H1 (cell line): ENCODE measurements at regions of chr4 and their contacts with region 1.

Region 1: GRCh38 chr4:87916626-87917025 is 58.9 kb upstream of the SPP1 start:
- DNase-seq: no peak
- H3K4me3 ChIP-seq: no peak overlapping the region
- H3K27ac ChIP-seq: no peak overlapping the region
- H3K4me1 ChIP-seq: peaks cover 18 to 43% (median 32%) of the 10 kb centered on the region in 4 experiments
- H3K27me3 ChIP-seq: no peaks in the 10 kb centered on the region
- CTCF ChIP-seq: no peak
- EP300 ChIP-seq: no peak
- POLR2A ChIP-seq: no peak
- RAD21 ChIP-seq: no peak

Region 2: DNA sequence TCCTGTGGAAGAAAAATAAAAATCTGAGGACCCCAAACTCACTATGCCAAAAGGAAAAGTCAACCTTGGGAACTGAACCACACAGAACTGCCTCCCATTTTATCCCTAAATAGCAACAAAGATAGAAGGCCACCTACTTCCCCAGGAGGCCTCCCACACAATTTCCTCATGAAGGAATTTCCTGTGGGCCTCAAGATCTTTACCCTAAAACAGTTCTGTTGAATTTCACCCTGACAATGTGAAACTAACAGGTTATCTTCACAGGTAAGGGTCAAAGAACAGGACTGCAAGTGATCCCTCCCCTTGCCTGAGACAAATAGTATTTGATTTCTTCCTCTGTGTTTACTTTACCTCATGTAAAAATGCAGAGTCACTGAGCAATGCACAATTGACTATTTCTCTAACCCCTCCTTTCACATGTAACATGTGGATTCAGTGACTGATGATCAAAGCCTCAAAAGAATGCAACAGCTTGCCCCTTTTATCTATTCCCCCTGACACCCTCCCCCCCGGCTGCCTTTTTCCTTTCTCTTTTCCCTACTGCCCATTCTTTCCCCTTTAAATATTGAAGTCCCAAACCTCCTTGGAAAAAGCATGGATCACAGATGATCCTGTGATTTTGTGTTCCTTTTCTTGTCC is 50.5 kb before region 1 on chr4:
- CTCF ChIA-PET with region 1: interaction called, 5 read pairs
- POLR2A ChIA-PET with region 1: interaction called, 101 read pairs
- DNase-seq: peak in 1 of 2 experiments; percentile 47
- H3K4me3 ChIP-seq: peak overlapping the region in 3 of 4 experiments; percentile 15 to 55 (median 15); a peak in 3 of 8 replicates
- H3K27ac ChIP-seq: peak overlapping the region; percentile 59; the same call in 1 of the 2 replicates
- H3K4me1 ChIP-seq: peaks cover 0 to 14% (median 7%) of the 10 kb centered on the region in 4 experiments; a peak in 3 of 7 replicates
- H3K27me3 ChIP-seq: no peaks in the 10 kb centered on the region
- CTCF ChIP-seq: no peak
- EP300 ChIP-seq: no peak; a peak in 1 of 3 replicates
- POLR2A ChIP-seq: peak; percentile 45 to 60; a peak in 2 of 3 replicates
- RAD21 ChIP-seq: no peak

Region 3: DNA sequence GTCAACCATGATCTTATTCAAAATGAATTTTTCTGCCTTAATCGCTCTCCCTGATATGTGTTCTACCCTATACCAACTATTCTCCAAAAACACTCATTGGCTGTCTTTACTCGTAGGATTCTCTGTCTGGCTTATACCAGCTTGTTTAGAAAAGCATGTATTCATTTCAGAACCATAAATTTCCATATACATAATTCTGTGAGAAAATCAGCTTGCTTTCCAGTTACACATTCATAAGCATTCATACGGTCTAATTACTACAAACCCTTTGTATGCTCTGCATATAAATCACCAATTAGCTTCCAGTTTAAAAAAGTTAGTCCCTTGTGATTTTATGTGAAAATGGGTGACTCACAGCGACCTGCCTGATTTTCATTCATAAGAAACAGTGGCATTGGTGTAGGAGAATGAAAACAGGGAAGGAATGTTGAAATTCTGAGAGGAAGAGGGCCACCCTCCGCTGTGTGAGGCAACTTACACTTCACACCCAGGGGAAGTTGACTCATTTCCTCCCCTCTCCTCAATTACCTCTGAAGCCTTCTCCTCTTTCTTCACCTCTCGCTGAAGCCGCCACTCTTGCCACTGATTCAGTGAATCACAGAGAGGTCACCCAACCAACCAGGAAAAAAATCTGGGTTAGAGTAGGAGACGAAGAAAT is 20.5 kb before region 1 on chr4:
- CTCF ChIA-PET with region 1: interaction called, 3 read pairs
- POLR2A ChIA-PET with region 1: interaction called, 19 read pairs
- DNase-seq: peak in 1 of 2 experiments; percentile 57
- H3K4me3 ChIP-seq: no peak overlapping the region
- H3K27ac ChIP-seq: no peak overlapping the region
- H3K4me1 ChIP-seq: peaks cover 2 to 6% (median 2%) of the 10 kb centered on the region in 4 experiments; a peak in 4 of 7 replicates
- H3K27me3 ChIP-seq: no peaks in the 10 kb centered on the region
- CTCF ChIP-seq: no peak
- EP300 ChIP-seq: no peak
- POLR2A ChIP-seq: no peak
- RAD21 ChIP-seq: no peak

Region 4: GRCh38 chr4:87926554-87927098 is 10.0 kb after region 1 on chr4:
- CTCF ChIA-PET with region 1: no interaction called
- POLR2A ChIA-PET with region 1: interaction called, 143 read pairs
- DNase-seq: no peak
- H3K4me3 ChIP-seq: peak overlapping the region; percentile 34 to 69 (median 36)
- H3K27ac ChIP-seq: no peak overlapping the region
- H3K4me1 ChIP-seq: peaks cover 0 to 3% (median under 1%) of the 10 kb centered on the region in 4 experiments; a peak in 1 of 7 replicates
- H3K27me3 ChIP-seq: no peaks in the 10 kb centered on the region
- CTCF ChIP-seq: no peak
- EP300 ChIP-seq: no peak
- POLR2A ChIP-seq: peak; percentile 63 to 90
- RAD21 ChIP-seq: no peak

Region 5: DNA sequence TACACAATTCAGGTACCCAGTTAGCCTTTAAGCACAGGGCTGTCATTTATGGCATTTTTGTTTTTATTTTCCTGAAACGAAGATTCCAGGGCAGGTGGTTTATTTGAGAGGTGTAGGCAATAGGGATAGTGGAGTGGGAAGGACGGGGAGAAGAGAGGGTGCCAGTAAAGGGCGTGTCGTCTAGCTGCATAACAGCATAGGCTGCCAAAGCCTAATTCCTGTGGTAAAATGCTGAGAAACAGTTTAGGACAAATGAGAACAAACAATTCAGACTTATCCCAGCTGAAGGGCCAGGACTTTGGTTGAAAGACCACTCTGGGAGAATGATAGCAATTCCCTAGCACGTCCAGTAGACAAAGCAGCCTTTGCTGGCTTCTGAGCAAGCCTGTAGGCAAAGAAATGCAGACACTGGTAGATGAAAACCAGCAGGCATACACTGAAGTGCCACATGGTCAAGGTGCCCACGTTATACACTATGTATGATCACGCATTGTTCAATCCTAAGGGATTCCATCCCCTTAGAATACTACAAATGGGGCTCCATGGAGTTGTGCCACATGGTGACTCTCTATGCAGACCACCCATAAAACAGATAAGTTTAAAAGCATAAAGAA is 161.4 kb after region 1 on chr4:
- CTCF ChIA-PET with region 1: no interaction called
- POLR2A ChIA-PET with region 1: no interaction called
- DNase-seq: no peak
- H3K4me3 ChIP-seq: no peak overlapping the region
- H3K27ac ChIP-seq: no peak overlapping the region
- H3K4me1 ChIP-seq: peaks cover 0 to 3% (median 0%) of the 10 kb centered on the region in 4 experiments; a peak in 3 of 7 replicates
- H3K27me3 ChIP-seq: no peaks in the 10 kb centered on the region
- CTCF ChIP-seq: no peak
- EP300 ChIP-seq: no peak
- POLR2A ChIP-seq: no peak
- RAD21 ChIP-seq: no peak

Region 6: GRCh38 chr4:88104902-88105610 is 188.4 kb after region 1 on chr4:
- CTCF ChIA-PET with region 1: no interaction called
- POLR2A ChIA-PET with region 1: no interaction called
- DNase-seq: no peak
- H3K4me3 ChIP-seq: no peak overlapping the region
- H3K27ac ChIP-seq: no peak overlapping the region
- H3K4me1 ChIP-seq: no peaks in the 10 kb centered on the region
- H3K27me3 ChIP-seq: no peaks in the 10 kb centered on the region
- CTCF ChIP-seq: no peak
- EP300 ChIP-seq: no peak
- POLR2A ChIP-seq: no peak
- RAD21 ChIP-seq: no peak